ENCODE measurements at regions of chr10 and their contacts with region 1.

Region 1: DNA sequence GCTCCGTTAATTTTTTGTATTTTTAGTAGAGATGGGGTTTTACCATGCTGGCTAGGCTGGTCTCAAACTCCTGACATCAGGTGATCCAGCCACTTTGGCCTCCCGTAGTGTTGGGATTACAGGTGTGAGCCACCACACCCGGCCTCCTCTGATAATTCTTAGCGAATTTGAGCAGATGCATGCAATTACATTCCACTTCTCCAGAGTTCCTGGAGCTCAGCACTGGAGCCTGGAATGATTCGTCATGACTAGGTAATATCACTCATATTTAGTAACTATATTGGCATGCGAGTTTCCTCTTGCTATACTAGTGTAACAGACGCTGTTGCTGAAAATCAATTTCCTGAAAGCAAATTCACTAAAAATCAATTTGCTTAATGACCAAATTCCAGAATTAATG is 86.8 kb downstream of the MKX start:
- DNase-seq: no peak
- H3K4me3 ChIP-seq: no peak overlapping the region
- H3K27ac ChIP-seq: no peak overlapping the region
- H3K4me1 ChIP-seq: no peaks in the 10 kb centered on the region; a peak in 1 of 7 replicates
- H3K27me3 ChIP-seq: no peaks in the 10 kb centered on the region
- CTCF ChIP-seq: no peak
- EP300 ChIP-seq: no peak
- POLR2A ChIP-seq: no peak
- RAD21 ChIP-seq: no peak

Region 2: GRCh38 chr10:27542812-27543211 is 116.0 kb before region 1 on chr10:
- CTCF ChIA-PET with region 1: no interaction called
- POLR2A ChIA-PET with region 1: no interaction called
- DNase-seq: no peak
- H3K4me3 ChIP-seq: no peak overlapping the region
- H3K27ac ChIP-seq: no peak overlapping the region
- H3K4me1 ChIP-seq: no peaks in the 10 kb centered on the region
- H3K27me3 ChIP-seq: no peaks in the 10 kb centered on the region
- CTCF ChIP-seq: no peak
- EP300 ChIP-seq: no peak
- POLR2A ChIP-seq: no peak
- RAD21 ChIP-seq: no peak

Region 3: DNA sequence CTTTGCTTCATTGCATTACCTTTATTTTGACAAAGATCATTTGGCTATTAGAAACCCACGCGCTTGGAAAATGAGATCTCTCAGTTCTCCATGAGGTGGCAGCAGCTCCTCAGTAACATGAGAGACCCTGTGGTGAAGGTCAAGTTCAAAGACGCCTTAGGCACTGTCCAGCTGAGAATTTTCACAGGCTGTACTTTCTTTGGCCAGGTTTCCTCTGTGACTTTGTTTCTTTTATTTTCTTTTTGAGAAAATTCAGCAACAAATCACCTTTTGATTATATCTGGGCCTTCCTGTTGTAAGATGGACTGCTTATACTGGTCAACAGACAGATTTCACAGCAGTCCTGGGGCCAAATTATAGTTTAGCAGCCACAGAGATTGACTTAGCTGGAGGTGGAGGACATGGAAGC is 100.2 kb before region 1 on chr10:
- CTCF ChIA-PET with region 1: interaction called, 13 read pairs
- POLR2A ChIA-PET with region 1: no interaction called
- DNase-seq: peak; percentile 7 to 54
- H3K4me3 ChIP-seq: no peak overlapping the region
- H3K27ac ChIP-seq: no peak overlapping the region
- H3K4me1 ChIP-seq: no peaks in the 10 kb centered on the region; a peak in 1 of 7 replicates
- H3K27me3 ChIP-seq: no peaks in the 10 kb centered on the region
- CTCF ChIP-seq: peak in 2 of 3 experiments; percentile 77 to 85; a peak in 3 of 4 replicates
- EP300 ChIP-seq: no peak
- POLR2A ChIP-seq: no peak
- RAD21 ChIP-seq: peak; percentile 94 to 95

Region 4: GRCh38 chr10:27646224-27647175 is 12.3 kb before region 1 on chr10:
- CTCF ChIA-PET with region 1: interaction called, 15 read pairs
- POLR2A ChIA-PET with region 1: no interaction called
- DNase-seq: no peak
- H3K4me3 ChIP-seq: no peak overlapping the region
- H3K27ac ChIP-seq: no peak overlapping the region
- H3K4me1 ChIP-seq: no peaks in the 10 kb centered on the region
- H3K27me3 ChIP-seq: no peaks in the 10 kb centered on the region
- CTCF ChIP-seq: no peak
- EP300 ChIP-seq: no peak
- POLR2A ChIP-seq: no peak
- RAD21 ChIP-seq: no peak

Region 5: DNA sequence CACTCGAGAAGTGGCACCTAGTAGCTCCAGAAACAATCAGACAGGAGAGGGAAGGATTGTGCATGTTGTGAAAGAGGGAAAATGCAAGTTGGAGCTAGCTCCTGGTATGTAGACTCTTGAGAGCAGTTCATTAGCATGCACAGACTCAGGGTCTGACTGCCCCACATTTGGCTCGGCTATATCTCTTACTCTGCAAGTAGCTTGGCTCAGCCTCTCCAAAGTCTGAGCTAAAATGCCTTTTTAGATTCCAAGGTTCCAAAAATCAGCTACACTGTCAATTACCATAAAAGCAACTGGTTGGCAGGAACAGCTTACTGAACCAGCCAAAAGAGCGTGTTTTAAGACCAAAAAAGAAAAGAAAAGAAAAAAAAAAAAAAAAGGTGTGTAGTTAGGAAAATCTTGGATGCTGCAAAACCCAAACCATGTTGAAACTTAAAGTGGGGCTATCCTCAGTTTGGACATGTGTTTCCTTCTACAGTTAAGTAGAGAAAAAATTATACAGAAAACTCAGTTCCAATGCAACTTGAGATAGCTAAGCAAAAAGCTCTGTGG is 21.3 kb after region 1 on chr10:
- CTCF ChIA-PET with region 1: interaction called, 11 read pairs
- POLR2A ChIA-PET with region 1: no interaction called
- DNase-seq: no peak
- H3K4me3 ChIP-seq: no peak overlapping the region
- H3K27ac ChIP-seq: no peak overlapping the region
- H3K4me1 ChIP-seq: peaks cover 0 to 5% (median 0%) of the 10 kb centered on the region in 4 experiments; a peak in 1 of 7 replicates
- H3K27me3 ChIP-seq: no peaks in the 10 kb centered on the region
- CTCF ChIP-seq: no peak
- EP300 ChIP-seq: no peak
- POLR2A ChIP-seq: no peak
- RAD21 ChIP-seq: no peak

Region 6: GRCh38 chr10:27699776-27700175 is 41.0 kb after region 1 on chr10:
- CTCF ChIA-PET with region 1: no interaction called
- POLR2A ChIA-PET with region 1: no interaction called
- DNase-seq: no peak
- H3K4me3 ChIP-seq: no peak overlapping the region
- H3K27ac ChIP-seq: no peak overlapping the region
- H3K4me1 ChIP-seq: peaks cover 0 to 9% (median 2%) of the 10 kb centered on the region in 4 experiments; a peak in 3 of 7 replicates
- H3K27me3 ChIP-seq: no peaks in the 10 kb centered on the region
- CTCF ChIP-seq: no peak
- EP300 ChIP-seq: no peak
- POLR2A ChIP-seq: no peak
- RAD21 ChIP-seq: no peak